ENCODE measurements at regions of chr5 and their contacts with region 1.

Region 1: DNA sequence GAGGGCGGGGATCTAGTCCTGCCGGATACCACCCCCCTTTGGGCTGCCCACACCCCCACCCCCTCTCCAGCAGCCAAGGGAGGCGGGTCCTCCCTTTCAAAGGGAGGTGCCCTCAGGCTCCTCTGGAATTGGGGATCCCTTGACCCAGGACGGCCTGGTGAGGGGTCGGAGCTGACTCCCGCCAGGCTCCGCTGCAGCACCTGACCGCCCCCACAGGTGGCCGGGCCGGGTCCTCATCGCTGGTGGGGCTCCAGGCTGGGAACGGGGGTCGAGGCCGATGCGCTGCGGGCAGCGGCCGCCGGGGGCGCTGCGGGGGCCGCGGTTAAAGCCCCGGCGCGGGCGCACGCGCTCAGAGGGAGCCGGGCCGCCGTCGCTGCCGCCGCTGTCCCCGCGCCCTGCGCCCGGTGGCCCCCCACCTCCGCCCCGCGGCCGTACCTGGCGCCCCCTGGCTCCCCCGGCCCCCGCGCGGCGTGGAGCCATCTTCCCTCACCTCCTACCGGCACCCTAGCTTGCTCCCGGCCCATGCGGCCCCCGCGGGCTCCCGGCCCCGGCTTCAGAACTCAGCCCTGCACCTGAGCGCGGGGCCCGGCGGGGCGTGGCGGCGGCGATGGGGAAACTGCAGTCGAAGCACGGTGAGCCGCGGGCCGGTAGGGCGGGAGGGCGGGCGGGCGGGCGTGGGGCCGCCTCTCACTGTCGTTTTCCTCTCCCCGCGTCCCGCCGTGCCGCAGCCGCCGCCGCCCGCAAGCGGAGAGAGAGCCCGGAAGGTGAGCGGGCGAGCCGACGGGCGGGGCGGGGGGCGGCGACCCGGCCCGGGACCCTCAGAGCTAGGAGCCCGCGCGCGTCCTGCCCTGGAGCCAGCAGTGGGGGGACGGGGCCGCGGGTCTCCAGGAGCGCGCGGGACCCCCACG is at the start of gene NKD2:
- DNase-seq: peak; percentile 20 to 48
- H3K4me3 ChIP-seq: peak within 1 kb of the TSS; percentile 37 to 84 (median 67)
- H3K27ac ChIP-seq: peak within 1 kb of the TSS in 1 of 2 donors; percentile 26
- H3K4me1 ChIP-seq: peaks cover 5 to 16% of the 10 kb centered on the region in 2 donors
- H3K27me3 ChIP-seq: peaks cover 0 to 13% of the 10 kb centered on the region in 2 donors
- CTCF ChIP-seq: peak; percentile 41 to 83 (median 48)
- POLR2A ChIP-seq: no peak
- total RNA-seq, gene NKD2: 5.9 to 16.7 TPM in 2 of 3 donors, not detected in the other

Region 2: DNA sequence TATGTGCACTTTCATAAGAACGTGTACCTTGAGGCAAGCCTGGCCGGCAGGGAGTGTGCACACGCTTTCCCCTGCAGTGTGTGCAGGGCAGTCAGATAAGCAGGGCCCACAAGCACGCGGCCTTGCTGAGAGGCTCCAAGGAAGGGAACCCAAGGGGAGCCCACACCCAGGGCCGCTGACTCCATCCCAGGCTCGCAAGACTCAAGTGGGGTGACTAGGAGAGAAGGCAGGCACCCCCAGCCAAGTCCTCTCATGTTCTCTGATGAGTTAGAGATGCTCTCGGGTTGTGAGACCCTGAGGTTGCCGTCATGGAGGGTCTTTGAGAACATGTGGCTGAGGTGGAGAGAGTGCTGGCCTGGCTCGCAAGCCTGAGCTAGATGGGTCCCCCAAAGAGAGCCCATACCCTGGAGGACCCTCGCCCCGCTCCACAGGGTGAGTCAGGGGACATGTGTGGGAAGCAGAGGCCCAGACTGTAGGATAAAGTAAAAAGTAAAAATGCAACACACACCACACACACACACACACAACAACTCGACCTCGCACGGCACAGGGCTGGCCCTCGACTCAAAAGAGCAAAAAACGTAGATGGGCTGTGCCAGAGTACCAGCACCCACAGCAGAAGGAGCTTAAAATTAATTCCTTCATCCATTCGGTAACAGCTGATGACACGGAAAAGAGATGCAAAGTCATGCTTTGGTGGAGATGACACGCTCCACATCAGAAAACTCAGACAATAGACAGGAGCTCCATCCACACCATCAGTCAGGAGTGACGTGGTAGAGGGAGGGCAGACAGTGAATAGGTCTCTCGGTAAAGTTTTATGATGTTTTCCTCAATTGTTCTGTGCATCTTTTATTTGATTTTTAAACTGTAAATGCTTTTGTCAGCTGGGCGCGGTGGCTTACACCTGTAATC is 54.9 kb before region 1 on chr5:
- intact Hi-C with region 1: no loop called
- DNase-seq: no peak
- H3K4me3 ChIP-seq: no peak overlapping the region
- H3K27ac ChIP-seq: no peak overlapping the region
- H3K4me1 ChIP-seq: peaks cover 9 to 11% of the 10 kb centered on the region in 2 donors
- H3K27me3 ChIP-seq: peaks cover 0 to 5% of the 10 kb centered on the region in 2 donors
- CTCF ChIP-seq: no peak
- POLR2A ChIP-seq: no peak

Region 3: GRCh38 chr5:965604-966344 is 42.9 kb before region 1 on chr5:
- intact Hi-C with region 1: loop called (anchors 1 kb)
- DNase-seq: peak in 1 of 2 donors; percentile 13
- H3K4me3 ChIP-seq: no peak overlapping the region
- H3K27ac ChIP-seq: no peak overlapping the region
- H3K4me1 ChIP-seq: no peaks in the 10 kb centered on the region
- H3K27me3 ChIP-seq: peaks cover 0 to 10% of the 10 kb centered on the region in 2 donors
- CTCF ChIP-seq: no peak
- POLR2A ChIP-seq: no peak

Region 4: GRCh38 chr5:989961-990530 is 18.7 kb before region 1 on chr5:
- intact Hi-C with region 1: loop called (anchors 1 kb)
- DNase-seq: peak in 1 of 2 donors; percentile 32
- H3K4me3 ChIP-seq: peak overlapping the region in 1 of 3 donors; percentile 19
- H3K27ac ChIP-seq: peak overlapping the region in 1 of 2 donors; percentile 87
- H3K4me1 ChIP-seq: no peaks in the 10 kb centered on the region
- H3K27me3 ChIP-seq: no peaks in the 10 kb centered on the region
- CTCF ChIP-seq: peak in 2 of 3 donors; percentile 14 to 22
- POLR2A ChIP-seq: no peak

Region 5: DNA sequence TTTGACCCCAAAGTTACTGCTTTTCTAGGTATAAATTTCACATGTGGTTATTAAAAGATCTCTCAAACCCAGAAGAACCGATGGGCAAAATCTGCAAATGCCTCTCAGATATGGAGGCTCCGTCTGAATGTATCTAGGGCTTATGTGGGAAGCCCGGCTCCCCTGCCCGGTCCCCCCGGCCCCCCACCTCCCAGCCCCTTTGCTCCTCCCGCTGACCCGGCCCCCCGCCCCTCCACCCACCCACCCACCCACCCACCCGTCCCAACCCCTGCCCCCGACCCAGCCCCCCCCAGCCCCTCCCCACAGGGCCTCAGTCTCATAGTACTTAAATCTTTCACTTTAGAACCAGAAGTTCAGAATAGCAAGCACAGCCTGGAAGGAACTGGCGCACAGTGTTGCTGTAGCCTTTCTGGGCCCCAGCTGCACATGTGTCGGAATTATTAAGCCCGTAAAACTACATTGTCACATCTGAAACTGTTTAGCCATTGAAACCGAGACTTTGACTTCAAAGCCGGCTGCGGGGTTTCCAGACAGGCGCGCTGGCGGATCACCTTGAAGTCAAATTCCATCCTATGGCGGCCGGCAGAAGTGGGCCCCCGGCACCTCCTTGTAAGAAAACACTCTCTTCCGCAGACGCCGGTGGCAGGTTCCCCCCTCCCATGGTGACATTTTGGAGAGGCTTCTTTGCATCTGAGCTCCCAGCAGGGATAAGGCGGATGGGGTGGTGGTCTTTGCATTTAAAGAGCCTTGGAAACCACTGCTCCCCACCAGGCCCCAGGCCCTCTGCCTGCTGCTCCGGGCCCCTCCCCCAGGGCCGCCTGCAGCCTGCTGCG is 12.6 kb after region 1 on chr5:
- intact Hi-C with region 1: no loop called
- DNase-seq: no peak
- H3K4me3 ChIP-seq: no peak overlapping the region
- H3K27ac ChIP-seq: no peak overlapping the region
- H3K4me1 ChIP-seq: no peaks in the 10 kb centered on the region
- H3K27me3 ChIP-seq: no peaks in the 10 kb centered on the region
- CTCF ChIP-seq: no peak
- POLR2A ChIP-seq: no peak

Region 6: DNA sequence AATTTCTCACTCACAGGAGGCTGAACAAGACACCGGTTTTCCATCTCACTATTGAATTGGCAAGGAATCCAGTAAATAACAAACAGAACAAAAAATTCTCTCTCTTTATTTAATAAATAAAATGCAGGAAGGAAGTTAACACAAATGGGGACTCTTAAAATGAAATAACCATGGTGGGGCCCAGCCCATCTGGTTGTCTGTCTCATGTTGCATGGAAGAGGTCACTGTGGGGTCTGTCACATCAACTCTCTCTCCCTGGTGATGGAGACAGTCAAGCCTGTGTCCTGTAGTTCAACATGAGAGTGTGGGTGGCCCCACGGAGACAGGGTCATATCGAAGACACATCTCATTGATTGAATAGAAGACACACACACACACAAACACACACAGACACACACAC is 1445.1 kb after region 1 on chr5:
- intact Hi-C with region 1: no loop called
- DNase-seq: no peak
- H3K4me3 ChIP-seq: no peak overlapping the region
- H3K27ac ChIP-seq: no peak overlapping the region
- H3K4me1 ChIP-seq: no peaks in the 10 kb centered on the region
- H3K27me3 ChIP-seq: no peaks in the 10 kb centered on the region
- CTCF ChIP-seq: no peak
- POLR2A ChIP-seq: no peak